Spleen (tissue), 13 donors: ENCODE measurements at regions of chr3 and their contacts with region 1.

Region 1: GRCh38 chr3:58532794-58533220 is 4.2 kb downstream of the ACOX2 start:
- DNase-seq: peak; percentile 94
- H3K4me3 ChIP-seq: no peak overlapping the region
- H3K27ac ChIP-seq: no peak overlapping the region
- H3K4me1 ChIP-seq: peaks cover 0 to 39% (median 10%) of the 10 kb centered on the region in 6 donors
- H3K27me3 ChIP-seq: no peaks in the 10 kb centered on the region
- CTCF ChIP-seq: peak; percentile 84 to 97 (median 95)
- POLR2A ChIP-seq: no peak

Region 2: DNA sequence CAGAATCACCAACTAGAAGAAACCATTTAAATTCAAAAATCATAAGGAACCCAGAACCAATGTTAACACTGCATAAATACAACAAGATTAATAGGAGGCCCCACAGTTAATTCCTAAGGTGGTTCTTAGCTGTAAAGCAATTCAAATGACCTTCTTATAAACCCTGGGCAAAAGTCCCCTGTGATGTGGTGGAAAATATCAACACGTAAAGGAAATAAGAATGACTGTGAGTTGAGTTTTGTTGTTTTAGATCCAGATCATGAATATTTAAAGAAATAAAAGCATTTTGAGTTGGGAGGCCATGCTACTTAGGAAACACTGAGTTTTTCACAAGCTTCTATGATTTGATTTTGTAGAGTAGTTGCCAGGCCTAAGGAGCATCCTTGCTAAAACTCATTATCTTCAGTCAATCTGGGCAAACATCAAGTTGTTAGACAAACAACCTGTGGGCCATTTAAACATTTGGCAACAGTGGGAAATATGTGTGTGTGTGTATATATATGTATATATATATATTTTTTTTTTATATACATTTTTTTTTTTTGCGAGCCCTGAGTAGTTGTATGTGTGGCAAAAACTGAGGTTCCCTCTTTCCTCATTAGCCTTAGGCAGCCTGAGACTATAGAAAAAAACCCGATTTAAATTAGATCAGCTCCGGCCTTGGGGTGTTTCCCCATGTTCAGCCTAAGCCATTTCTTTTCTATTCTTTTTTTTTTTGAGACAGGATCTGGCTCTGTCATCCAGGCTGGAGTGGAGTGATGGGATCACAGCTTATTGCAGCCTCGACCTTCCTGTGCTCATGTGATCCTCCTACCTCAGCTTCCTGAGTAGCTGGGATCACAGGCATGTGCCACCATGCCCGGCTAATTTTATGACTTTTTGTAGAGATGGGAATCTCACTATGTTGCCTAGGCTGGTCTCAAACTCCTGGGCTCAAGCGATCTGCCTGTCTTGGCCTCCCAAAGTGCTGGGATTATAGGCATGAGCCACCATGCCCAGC is 208.1 kb before region 1 on chr3:
- intact Hi-C with region 1: loop called (anchors 10 kb)
- DNase-seq: no peak
- H3K4me3 ChIP-seq: no peak overlapping the region
- H3K27ac ChIP-seq: peak overlapping the region; percentile 21 to 79 (median 70)
- H3K4me1 ChIP-seq: peaks cover 20 to 62% (median 40%) of the 10 kb centered on the region in 6 donors
- H3K27me3 ChIP-seq: no peaks in the 10 kb centered on the region
- CTCF ChIP-seq: no peak
- POLR2A ChIP-seq: no peak

Region 3: DNA sequence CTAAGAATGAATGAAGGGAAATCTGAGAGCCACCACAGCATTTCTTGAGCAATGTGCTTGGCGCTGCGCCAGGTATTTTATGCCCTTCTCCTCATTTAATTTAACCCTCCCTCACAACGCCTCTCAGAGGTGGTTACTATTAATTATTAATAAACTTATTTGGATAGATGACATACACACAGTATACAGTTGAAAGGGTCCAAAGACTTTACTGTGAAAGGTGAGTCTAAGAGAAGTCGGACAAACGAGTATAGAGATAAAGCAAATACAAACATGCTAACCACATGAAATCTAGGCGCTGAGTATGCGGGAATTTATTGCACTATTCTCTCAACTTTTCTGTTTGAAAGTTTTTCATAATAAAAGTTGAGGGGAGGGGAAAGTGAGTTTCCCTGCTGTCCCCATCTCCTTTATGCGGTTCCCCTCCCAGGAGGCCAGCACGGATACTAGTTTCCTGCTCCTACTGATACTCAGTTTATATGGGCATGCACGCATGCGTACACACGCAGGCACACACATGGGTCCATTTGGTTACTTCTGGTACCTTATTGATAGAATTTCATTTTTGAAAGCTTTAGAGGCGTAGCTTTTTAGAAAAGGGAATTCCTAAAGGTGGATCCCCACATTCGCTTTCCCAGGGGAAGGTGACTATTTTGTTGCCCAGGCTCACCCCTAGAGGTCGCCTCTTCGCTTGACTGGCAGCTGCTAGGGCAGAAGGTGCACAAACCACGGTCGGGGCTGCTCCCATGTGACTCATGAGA is 69.4 kb before region 1 on chr3:
- intact Hi-C with region 1: loop called (anchors 10 kb)
- DNase-seq: peak; percentile 87
- H3K4me3 ChIP-seq: peak overlapping the region in 6 of 8 donors; percentile 1 to 58 (median 18)
- H3K27ac ChIP-seq: peak overlapping the region in 1 of 8 donors; percentile 4
- H3K4me1 ChIP-seq: peaks cover 8 to 17% (median 12%) of the 10 kb centered on the region in 6 donors
- H3K27me3 ChIP-seq: no peaks in the 10 kb centered on the region
- CTCF ChIP-seq: peak; percentile 47 to 79 (median 67)
- POLR2A ChIP-seq: no peak